Activated CD4-positive, alpha-beta memory T cell treated with anti-CD3 and anti-CD28 coated beads, Interleukin-2, amount 10 ng/mL, durations not matched to agents 7 days and 5 days (primary cell): ENCODE measurements at regions of chr1 and their contacts with region 1.

Region 1: DNA sequence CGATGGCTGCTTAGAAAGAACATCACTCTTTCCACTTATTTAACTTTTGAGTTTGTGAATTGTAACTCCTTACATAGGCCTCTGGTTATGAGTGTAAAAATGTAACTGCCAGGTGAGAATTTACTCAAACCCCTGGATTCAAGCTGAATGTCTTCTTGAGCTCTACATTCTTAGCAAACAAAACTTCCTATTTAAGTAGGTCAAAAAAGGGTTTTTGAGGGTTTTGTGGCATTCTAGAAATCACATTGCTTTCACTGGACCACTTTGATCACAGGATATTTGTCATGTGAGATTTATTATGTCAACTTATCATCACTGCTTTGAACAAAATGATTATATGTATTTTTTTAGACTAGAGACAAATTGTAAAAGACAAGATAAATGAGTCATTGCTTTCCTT is 5.7 kb downstream of the IL23R start:
- DNase-seq: no peak
- H3K4me3 Mint-ChIP-seq: peak overlapping the region; percentile 55
- H3K27ac Mint-ChIP-seq: peak overlapping the region; percentile 82
- H3K4me1 Mint-ChIP-seq: peaks cover 68% of the 10 kb centered on the region
- H3K27me3 Mint-ChIP-seq: peaks cover 1% of the 10 kb centered on the region

Region 2: GRCh38 chr1:67194209-67194863 is 22.4 kb after region 1 on chr1:
- CTCF ChIA-PET with region 1: interaction called, 4 read pairs
- POLR2A ChIA-PET with region 1: interaction called, 23 read pairs
- DNase-seq: no peak
- H3K4me3 Mint-ChIP-seq: peak overlapping the region; percentile 21
- H3K27ac Mint-ChIP-seq: peak overlapping the region; percentile 75
- H3K4me1 Mint-ChIP-seq: peaks cover 24% of the 10 kb centered on the region
- H3K27me3 Mint-ChIP-seq: no peaks in the 10 kb centered on the region